CD8-positive, alpha-beta T cell (primary cell): ENCODE measurements at regions of chr2 and their contacts with region 1.

Region 1: GRCh38 chr2:45567974-45568789 is 42.9 kb downstream of the SRBD1 start:
- DNase-seq: peak in 2 of 9 experiments; percentile 82 to 93
- ATAC-seq: peak; percentile 97
- H3K4me3 ChIP-seq: peak overlapping the region; percentile 53 to 55
- H3K4me3 Mint-ChIP-seq: peak overlapping the region; percentile 89
- H3K27ac ChIP-seq: peak overlapping the region; percentile 51 to 93
- H3K27ac Mint-ChIP-seq: peak overlapping the region; percentile 88
- H3K4me1 ChIP-seq: peaks cover 15% of the 10 kb centered on the region
- H3K4me1 Mint-ChIP-seq: peaks cover 27% of the 10 kb centered on the region
- H3K27me3 ChIP-seq: no peaks in the 10 kb centered on the region
- H3K27me3 Mint-ChIP-seq: no peaks in the 10 kb centered on the region
- CTCF ChIP-seq: no peak

Region 2: GRCh38 chr2:45611020-45611737 is 43.0 kb after region 1 on chr2 and contains the start of gene SRBD1:
- CTCF ChIA-PET with region 1: no interaction called
- POLR2A ChIA-PET with region 1: interaction called, 3 read pairs
- intact Hi-C with region 1: loop called in 1 of 2 experiments (anchors 1 kb)
- DNase-seq: peak; percentile 61 to 95 (median 85)
- ATAC-seq: peak; percentile 82
- H3K4me3 ChIP-seq: peak within 1 kb of the TSS; percentile 61 to 86
- H3K4me3 Mint-ChIP-seq: peak within 1 kb of the TSS; percentile 97
- H3K27ac ChIP-seq: peak within 1 kb of the TSS; percentile 82 to 94
- H3K27ac Mint-ChIP-seq: peak within 1 kb of the TSS; percentile 97
- H3K4me1 ChIP-seq: peaks cover 11% of the 10 kb centered on the region
- H3K4me1 Mint-ChIP-seq: peaks cover 32% of the 10 kb centered on the region
- H3K27me3 ChIP-seq: no peaks in the 10 kb centered on the region
- H3K27me3 Mint-ChIP-seq: no peaks in the 10 kb centered on the region
- CTCF ChIP-seq: no peak
- total RNA-seq, gene SRBD1: 11.1 to 11.6 TPM

Region 3: DNA sequence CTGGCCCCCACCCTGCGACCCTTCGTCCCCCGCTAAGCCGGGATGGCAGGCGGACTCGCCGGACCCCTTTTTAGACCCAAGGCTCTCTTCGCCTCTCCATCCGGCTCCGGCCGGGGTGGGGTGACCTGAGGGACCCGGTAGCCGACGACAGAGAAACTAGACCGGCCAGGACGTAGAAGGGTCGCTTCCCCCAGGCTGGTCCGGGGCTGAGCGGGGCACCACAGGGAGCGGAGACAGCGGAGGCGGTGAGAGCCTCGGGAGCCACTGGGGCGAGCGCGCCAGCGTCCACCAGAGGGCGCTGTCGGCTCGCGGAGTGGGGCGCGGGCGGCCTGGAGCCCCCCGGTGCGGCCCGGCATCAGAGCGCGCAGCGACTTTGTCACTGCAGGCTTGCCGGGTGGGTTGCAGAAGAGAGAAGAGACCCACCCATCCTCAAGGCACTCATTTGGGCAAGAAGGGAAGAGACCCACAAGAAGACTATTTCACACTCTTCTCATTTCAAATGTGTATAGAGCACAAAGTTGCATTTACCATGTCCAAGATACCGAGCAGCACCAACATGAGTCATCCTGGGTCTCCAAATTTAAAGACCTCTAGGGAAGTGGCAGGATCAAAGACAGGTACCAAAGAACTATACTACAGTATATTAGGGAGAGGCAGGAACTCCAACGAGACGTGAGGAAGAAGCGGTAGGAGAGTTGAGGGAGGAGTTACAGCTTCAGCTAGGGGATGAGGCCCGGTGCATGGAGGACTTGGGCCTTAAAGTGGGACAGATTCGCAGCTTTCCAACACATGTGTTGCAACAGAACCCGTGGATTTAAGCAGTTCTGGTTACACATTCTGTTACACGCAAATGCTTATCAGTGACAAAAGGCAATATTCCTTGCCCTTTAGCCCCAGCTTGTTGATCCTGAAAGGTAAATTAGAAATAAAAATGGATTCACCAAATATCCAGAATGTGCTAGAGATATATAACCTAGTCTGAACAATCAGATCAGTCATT is 75.7 kb after region 1 on chr2:
- CTCF ChIA-PET with region 1: no interaction called
- POLR2A ChIA-PET with region 1: no interaction called
- intact Hi-C with region 1: no loop called
- DNase-seq: peak; percentile 56 to 88 (median 73)
- ATAC-seq: peak; percentile 97
- H3K4me3 ChIP-seq: peak overlapping the region; percentile 22 to 41
- H3K4me3 Mint-ChIP-seq: peak overlapping the region; percentile 49
- H3K27ac ChIP-seq: no peak overlapping the region
- H3K27ac Mint-ChIP-seq: no peak overlapping the region
- H3K4me1 ChIP-seq: peaks cover 9% of the 10 kb centered on the region
- H3K4me1 Mint-ChIP-seq: peaks cover 6% of the 10 kb centered on the region
- H3K27me3 ChIP-seq: peaks cover 0 to 13% of the 10 kb centered on the region in 2 experiments
- H3K27me3 Mint-ChIP-seq: peaks cover 18% of the 10 kb centered on the region
- CTCF ChIP-seq: peak; percentile 81

Region 4: GRCh38 chr2:47402805-47403608 is 1834.8 kb after region 1 on chr2 and contains the start of gene MSH2:
- CTCF ChIA-PET with region 1: no interaction called
- POLR2A ChIA-PET with region 1: no interaction called
- intact Hi-C with region 1: loop called in 1 of 2 experiments (anchors 10 kb)
- DNase-seq: peak; percentile 72 to 96 (median 91)
- ATAC-seq: peak; percentile 93
- H3K4me3 ChIP-seq: peak within 1 kb of the TSS; percentile 81 to 100
- H3K4me3 Mint-ChIP-seq: peak within 1 kb of the TSS; percentile 98
- H3K27ac ChIP-seq: peak within 1 kb of the TSS; percentile 64 to 71
- H3K27ac Mint-ChIP-seq: peak within 1 kb of the TSS; percentile 94
- H3K4me1 ChIP-seq: peaks cover 15% of the 10 kb centered on the region
- H3K4me1 Mint-ChIP-seq: peaks cover 40% of the 10 kb centered on the region
- H3K27me3 ChIP-seq: no peaks in the 10 kb centered on the region
- H3K27me3 Mint-ChIP-seq: no peaks in the 10 kb centered on the region
- CTCF ChIP-seq: no peak
- total RNA-seq, gene MSH2: 5.6 to 8.8 TPM